ENCODE measurements at regions of chr12 and their contacts with region 1.

Region 1: DNA sequence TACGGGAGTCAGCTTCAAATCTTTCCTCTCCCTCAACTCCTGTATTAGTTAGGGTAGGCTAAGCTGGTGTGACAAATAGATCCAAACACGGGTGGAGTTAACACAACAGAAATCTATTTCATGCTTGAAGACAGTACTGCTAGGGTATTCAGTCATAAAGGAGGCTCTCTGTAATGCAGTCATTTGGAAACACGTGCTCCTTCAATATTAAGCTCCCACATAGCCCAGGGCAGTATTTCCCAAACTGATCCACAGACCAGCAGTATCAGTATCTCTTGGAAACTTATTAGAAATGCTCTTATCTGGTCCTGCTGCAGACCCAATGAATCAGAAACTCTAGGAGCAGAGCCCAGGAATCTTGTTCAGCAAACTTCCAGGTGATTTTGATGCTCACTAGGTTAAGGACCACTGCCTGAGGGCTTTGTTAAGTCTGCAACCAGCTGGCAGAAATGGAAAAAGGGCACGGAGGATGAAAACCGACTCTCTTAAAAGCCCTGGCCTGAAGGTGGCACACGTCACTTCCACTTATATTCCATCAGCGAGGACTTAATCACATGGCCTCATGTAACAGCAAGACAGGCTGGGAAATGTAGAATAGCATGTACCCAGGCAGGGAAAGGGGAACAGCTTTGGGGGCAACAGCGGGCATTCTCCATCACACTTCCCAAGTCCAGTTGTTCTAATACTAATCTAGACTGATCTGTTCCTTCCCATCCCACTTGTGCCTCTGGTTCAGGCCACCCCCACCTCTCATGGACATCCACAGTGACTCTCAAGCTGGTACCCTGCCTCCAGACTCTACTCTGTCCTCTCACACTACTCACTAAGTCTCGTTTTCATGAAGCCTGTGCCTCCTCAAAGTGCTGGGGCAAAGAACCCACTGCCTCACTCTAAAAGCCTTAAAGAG is 38.2 kb upstream of the RIC8B start:
- DNase-seq: peak in 1 of 4 experiments; percentile 29
- ATAC-seq: peak; percentile 73
- H3K4me3 ChIP-seq: no peak overlapping the region
- H3K27ac ChIP-seq: no peak overlapping the region
- H3K4me1 ChIP-seq: peaks cover 0 to 17% of the 10 kb centered on the region in 2 experiments; a peak in 2 of 5 replicates
- H3K27me3 ChIP-seq: peaks cover 7 to 8% of the 10 kb centered on the region in 2 experiments; a peak in 4 of 5 replicates
- CTCF ChIP-seq: peak in 2 of 3 experiments; percentile 31 to 42; a peak in 4 of 6 replicates
- EP300 ChIP-seq: no peak
- POLR2A ChIP-seq: no peak
- RAD21 ChIP-seq: peak; percentile 22 to 40; a peak in 2 of 4 replicates

Region 2: DNA sequence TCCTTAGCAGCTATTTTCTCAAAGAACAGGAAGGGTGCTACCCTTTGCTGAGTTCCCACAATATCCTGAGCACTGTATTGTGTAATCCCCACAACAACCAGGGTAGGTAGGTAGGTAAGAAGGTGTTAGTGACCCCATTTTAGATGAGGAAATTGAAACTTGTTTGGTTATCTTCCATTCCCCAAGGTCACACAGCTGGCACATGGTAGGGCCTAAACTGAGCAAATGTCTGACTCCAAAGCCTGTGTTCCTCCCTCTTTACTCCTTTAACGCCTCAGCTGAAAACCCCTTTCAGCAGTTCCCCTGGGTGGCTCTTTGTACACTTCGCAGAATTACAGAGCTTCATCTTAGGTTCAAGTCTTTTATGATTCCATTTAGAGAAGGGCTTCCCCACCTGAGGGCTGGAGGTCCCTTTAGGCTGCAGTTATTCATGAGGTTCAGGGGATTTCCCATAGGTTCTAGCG is 11.7 kb after region 1 on chr12:
- CTCF ChIA-PET with region 1: no interaction called
- POLR2A ChIA-PET with region 1: interaction called, 10 read pairs
- in situ Hi-C with region 1: no loop called
- intact Hi-C with region 1: no loop called
- DNase-seq: no peak
- ATAC-seq: no peak
- H3K4me3 ChIP-seq: no peak overlapping the region
- H3K27ac ChIP-seq: no peak overlapping the region
- H3K4me1 ChIP-seq: no peaks in the 10 kb centered on the region
- H3K27me3 ChIP-seq: peaks cover 4 to 6% of the 10 kb centered on the region in 2 experiments; a peak in 4 of 5 replicates
- CTCF ChIP-seq: no peak
- EP300 ChIP-seq: no peak
- POLR2A ChIP-seq: no peak
- RAD21 ChIP-seq: no peak